ENCODE measurements at regions of chr15 and their contacts with region 1.

Region 1: GRCh38 chr15:73704869-73705645 is 20.9 kb downstream of the CD276 start:
- DNase-seq: no peak
- H3K4me3 ChIP-seq: no peak overlapping the region
- CTCF ChIP-seq: peak; percentile 85

Region 2: GRCh38 chr15:73305331-73306211 is 399.5 kb before region 1 on chr15:
- CTCF ChIA-PET with region 1: interaction called, 37 read pairs
- POLR2A ChIA-PET with region 1: no interaction called
- DNase-seq: peak; percentile 29
- H3K4me3 ChIP-seq: no peak overlapping the region
- CTCF ChIP-seq: peak; percentile 65

Region 3: GRCh38 chr15:73683777-73684580 is 21.1 kb before region 1 on chr15 and contains the start of gene CD276:
- CTCF ChIA-PET with region 1: interaction called, 378 read pairs
- POLR2A ChIA-PET with region 1: no interaction called
- DNase-seq: no peak
- H3K4me3 ChIP-seq: peak within 1 kb of the TSS; percentile 85
- CTCF ChIP-seq: no peak

Region 4: GRCh38 chr15:73727330-73727976 is 22.4 kb after region 1 on chr15:
- CTCF ChIA-PET with region 1: interaction called, 19 read pairs
- POLR2A ChIA-PET with region 1: no interaction called
- DNase-seq: peak; percentile 62
- H3K4me3 ChIP-seq: no peak overlapping the region
- CTCF ChIP-seq: no peak

Region 5: GRCh38 chr15:73856458-73857192 is 151.6 kb after region 1 on chr15:
- CTCF ChIA-PET with region 1: no interaction called
- POLR2A ChIA-PET with region 1: no interaction called
- DNase-seq: no peak
- H3K4me3 ChIP-seq: no peak overlapping the region
- CTCF ChIP-seq: no peak

Region 6: DNA sequence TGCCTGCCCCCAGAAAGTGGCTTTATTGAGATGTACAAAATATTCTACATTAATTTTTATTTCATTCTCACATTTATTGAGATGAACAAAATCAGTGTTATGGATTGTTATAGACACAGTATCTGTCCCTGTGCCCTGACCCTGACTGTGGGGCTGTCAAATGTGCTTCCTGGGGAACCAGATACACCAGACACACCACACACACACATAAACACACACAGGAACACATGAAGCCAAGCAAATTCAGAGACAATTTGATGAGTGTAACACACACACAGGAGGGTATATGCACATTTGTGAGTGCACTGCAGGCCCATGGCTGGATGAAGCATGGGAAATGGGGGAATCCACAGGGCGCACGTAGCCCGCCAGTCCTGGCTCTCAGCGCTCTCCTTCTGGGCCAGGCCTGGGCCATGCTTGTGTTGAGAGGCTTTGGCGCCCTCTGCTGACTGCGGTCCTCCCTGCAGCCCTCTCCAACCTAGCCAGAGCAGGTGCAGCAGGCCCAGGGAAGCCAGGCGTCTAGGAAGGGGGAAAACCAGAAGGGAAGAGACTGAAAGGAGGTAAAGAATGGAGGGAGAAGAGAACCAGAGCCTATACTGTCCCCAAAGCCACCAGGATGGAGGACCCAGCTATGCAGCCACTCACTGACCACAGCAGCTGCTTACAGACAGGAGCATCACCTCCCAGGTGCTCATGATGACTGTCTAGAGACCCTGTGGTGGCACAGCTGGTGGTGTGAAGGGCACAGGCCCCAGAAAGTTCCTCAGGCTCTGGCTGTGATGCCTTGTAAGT is 203.2 kb after region 1 on chr15:
- CTCF ChIA-PET with region 1: interaction called, 14 read pairs
- POLR2A ChIA-PET with region 1: no interaction called
- DNase-seq: no peak
- H3K4me3 ChIP-seq: no peak overlapping the region
- CTCF ChIP-seq: peak; percentile 98

Measured in AG04449 (cell line).